Left ventricle myocardium inferior (tissue), 1 donor: ENCODE measurements at regions of chr16 and their contacts with region 1.

Region 1: DNA sequence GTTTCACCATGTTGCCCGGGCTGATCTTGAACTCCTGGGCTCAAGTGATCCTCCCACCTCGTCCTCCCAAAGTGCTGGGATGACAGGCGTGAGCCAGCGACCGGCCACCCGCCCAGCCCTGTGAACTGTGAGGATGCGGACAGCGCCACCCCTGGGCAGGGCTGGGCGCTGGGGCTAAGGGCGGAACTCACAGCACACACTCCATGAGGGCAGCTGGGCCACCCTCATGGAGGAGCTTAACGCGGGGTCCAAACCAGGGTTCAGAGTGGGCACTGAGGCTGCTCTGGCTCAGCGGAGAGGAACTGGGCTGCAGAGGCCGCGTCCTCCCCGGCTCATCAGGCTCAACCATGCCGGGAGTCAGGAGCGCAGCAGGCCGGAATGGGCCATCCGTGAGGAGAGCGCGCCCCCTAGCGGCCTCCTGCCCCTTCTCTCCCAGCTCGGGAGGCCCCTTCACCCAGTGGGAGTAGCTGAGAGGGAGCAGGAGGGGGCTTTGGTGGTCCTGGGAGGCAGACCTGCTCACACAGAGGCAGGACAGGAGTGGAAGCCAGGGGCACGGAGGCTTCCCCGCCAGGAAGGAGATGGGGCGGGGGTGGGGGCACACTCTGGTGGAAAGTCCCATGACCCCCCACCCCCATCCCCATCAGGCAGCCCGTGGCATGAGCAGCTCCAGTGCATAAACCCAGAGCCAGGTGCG is 13.8 kb downstream of the CORO7 start:
- DNase-seq: peak; percentile 84
- H3K4me3 ChIP-seq: peak overlapping the region; percentile 22
- H3K27ac ChIP-seq: no peak overlapping the region
- H3K4me1 ChIP-seq: peaks cover 6% of the 10 kb centered on the region
- H3K27me3 ChIP-seq: no peaks in the 10 kb centered on the region
- CTCF ChIP-seq: peak; percentile 89

Region 2: GRCh38 chr16:4358831-4359561 is 43.6 kb before region 1 on chr16:
- intact Hi-C with region 1: loop called (anchors 2 kb)
- DNase-seq: peak; percentile 60
- H3K4me3 ChIP-seq: no peak overlapping the region
- H3K27ac ChIP-seq: no peak overlapping the region
- H3K4me1 ChIP-seq: peaks cover 4% of the 10 kb centered on the region
- H3K27me3 ChIP-seq: no peaks in the 10 kb centered on the region
- CTCF ChIP-seq: peak; percentile 95